GM18951 (cell line): ENCODE measurements at regions of chr6 and their contacts with region 1.

Region 1: GRCh38 chr6:70107852-70108629 is 194.8 kb downstream of the COL9A1 start:
- POLR2A ChIP-seq: no peak

Region 2: GRCh38 chr6:69732640-69733039 is 375.4 kb before region 1 on chr6:
- in situ Hi-C with region 1: loop called (anchors 25 kb)
- POLR2A ChIP-seq: no peak

Region 3: GRCh38 chr6:69835414-69836179 is 272.4 kb before region 1 on chr6:
- in situ Hi-C with region 1: loop called (anchors 25 kb)
- POLR2A ChIP-seq: no peak